ENCODE measurements at regions of chr20 and their contacts with region 1.

Region 1: GRCh38 chr20:3716195-3716834 is 3.9 kb upstream of the SIGLEC1 start:
- DNase-seq: peak; percentile 37
- ATAC-seq: peak; percentile 88
- H3K4me3 ChIP-seq: no peak overlapping the region
- H3K27ac ChIP-seq: no peak overlapping the region
- H3K4me1 ChIP-seq: no peaks in the 10 kb centered on the region
- H3K27me3 ChIP-seq: peaks cover 10% of the 10 kb centered on the region
- CTCF ChIP-seq: peak; percentile 63
- POLR2A ChIP-seq: no peak
- RAD21 ChIP-seq: peak; percentile 65

Region 2: DNA sequence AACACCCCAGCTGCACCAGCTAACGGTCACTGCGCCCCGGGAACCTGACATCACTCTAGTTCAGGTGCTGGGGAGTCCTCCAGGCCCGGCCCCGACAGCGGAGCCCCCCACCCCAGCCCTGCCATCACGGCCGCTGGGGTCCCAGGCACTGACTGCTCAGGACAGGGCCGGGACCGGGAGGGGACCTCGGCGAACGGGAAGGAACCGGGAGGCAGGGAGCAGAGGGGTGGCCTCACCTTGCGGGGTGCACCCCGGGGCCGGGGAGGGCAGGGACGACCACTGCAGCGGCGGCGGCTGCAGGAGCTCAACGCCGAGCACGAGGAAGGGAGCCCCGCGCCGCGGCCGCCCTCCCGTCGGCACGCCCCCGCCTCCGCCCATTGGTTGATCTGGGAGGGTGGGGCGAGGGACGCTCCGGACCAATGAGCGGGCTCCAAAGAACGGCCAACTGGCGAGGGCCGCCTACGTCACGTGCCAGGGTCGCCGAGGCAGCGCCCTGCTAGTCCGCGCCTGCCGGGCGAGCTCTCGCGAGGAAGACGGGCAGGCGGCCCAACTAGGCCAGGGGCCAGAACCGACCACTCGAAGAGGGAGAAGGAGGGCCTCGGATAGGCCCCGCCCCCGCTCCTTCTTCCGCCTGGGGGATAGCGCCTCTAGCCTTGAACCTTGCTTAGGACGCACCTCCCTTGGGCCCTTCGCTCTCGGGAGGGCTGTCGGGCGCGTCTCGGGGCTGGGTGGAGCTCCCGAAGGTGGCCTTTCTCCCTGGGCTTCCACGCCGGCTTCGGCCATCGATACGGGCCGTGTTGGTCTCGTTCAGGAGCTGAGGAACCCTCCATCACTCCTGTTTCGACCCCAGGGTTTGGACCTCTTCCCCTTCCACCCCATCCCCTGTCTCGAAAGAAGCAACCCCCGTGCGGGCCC is 51.4 kb after region 1 on chr20 and contains the start of gene ADISSP:
- CTCF ChIA-PET with region 1: no interaction called
- POLR2A ChIA-PET with region 1: no interaction called
- dilution Hi-C with region 1: no loop called
- in situ Hi-C with region 1: no loop called
- intact Hi-C with region 1: loop called (anchors 2 kb)
- DNase-seq: peak; percentile 98
- ATAC-seq: peak; percentile 96
- H3K4me3 ChIP-seq: peak within 1 kb of the TSS; percentile 67
- H3K27ac ChIP-seq: peak within 1 kb of the TSS; percentile 89
- H3K4me1 ChIP-seq: peaks cover 11% of the 10 kb centered on the region
- H3K27me3 ChIP-seq: no peaks in the 10 kb centered on the region
- CTCF ChIP-seq: peak; percentile 11; the same call in 1 of the 2 replicates
- POLR2A ChIP-seq: peak; percentile 79
- RAD21 ChIP-seq: no peak
- total RNA-seq, gene ADISSP: 31.4 and 31.9 TPM in 2 replicates

Region 3: GRCh38 chr20:3781153-3781910 is 65.0 kb after region 1 on chr20 and contains the start of gene SPEF1:
- CTCF ChIA-PET with region 1: no interaction called
- POLR2A ChIA-PET with region 1: no interaction called
- dilution Hi-C with region 1: no loop called
- in situ Hi-C with region 1: no loop called
- intact Hi-C with region 1: loop called (anchors 1 kb)
- DNase-seq: peak; percentile 92
- ATAC-seq: peak; percentile 75
- H3K4me3 ChIP-seq: peak within 1 kb of the TSS; percentile 25
- H3K27ac ChIP-seq: no peak within 1 kb of the TSS
- H3K4me1 ChIP-seq: peaks cover 18% of the 10 kb centered on the region
- H3K27me3 ChIP-seq: peaks cover 9% of the 10 kb centered on the region; the same call in 1 of the 2 replicates
- CTCF ChIP-seq: peak; percentile 54
- POLR2A ChIP-seq: 0 out of 2 replicates have a peak, but pooled peaks have one; percentile 14
- RAD21 ChIP-seq: peak; percentile 58
- total RNA-seq, gene SPEF1: under 0.01 TPM in 1 of 2 replicates, not detected in the other

Region 4: GRCh38 chr20:3854462-3854871 is 138.2 kb after region 1 on chr20:
- CTCF ChIA-PET with region 1: no interaction called
- POLR2A ChIA-PET with region 1: no interaction called
- dilution Hi-C with region 1: no loop called
- in situ Hi-C with region 1: no loop called
- intact Hi-C with region 1: loop called (anchors 1 kb)
- DNase-seq: no peak
- ATAC-seq: no peak; the same call in 1 of the 2 replicates
- H3K4me3 ChIP-seq: no peak overlapping the region
- H3K27ac ChIP-seq: no peak overlapping the region
- H3K4me1 ChIP-seq: no peaks in the 10 kb centered on the region
- H3K27me3 ChIP-seq: no peaks in the 10 kb centered on the region
- CTCF ChIP-seq: no peak
- POLR2A ChIP-seq: no peak
- RAD21 ChIP-seq: no peak